Sigmoid colon (tissue), 7 donors: ENCODE measurements at regions of chr4 and their contacts with region 1.

Region 1: DNA sequence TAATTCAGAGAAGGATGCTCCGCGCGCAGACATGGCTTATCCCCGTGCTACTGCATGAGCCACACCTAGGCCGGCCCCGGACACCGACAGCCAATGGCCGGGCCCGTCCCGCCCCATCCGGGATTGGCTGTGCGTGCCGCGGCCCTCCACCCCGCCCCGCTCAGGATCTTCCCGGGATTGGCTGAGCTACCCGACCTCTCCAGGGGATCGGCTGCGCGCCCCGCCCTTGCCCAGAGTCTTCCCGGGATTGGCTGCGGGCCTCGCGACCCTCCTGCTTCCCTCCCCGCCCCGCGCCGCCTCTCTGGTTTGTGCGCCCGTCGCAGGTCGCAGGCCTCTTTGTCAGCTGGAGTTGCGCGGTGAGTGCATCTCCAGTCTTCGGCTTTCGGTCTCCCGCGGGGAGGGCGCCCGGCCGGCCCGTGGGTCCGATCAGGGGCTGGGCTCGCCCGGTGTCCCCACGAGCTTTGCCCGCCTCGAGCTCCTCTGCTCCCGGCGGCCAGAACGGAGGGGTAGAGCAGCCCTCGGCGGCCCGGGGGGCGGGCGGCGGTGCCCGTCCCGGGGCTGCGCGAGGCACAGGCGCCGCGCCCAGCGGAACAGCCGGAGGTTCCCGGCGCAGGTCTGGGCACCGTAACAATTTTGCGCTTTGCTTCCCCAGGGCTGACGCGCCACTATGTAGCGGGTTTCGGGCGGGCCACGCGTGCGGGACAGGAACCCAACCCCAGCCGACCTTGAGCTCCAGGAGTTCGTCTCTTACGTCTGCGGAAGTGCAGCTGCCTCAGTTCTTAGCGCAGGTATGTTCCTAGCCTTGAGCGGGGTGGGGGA is 38.8 kb downstream of the ERVMER34-1 start:
- DNase-seq: peak; percentile 99
- H3K4me3 ChIP-seq: peak overlapping the region; percentile 58 to 94 (median 80)
- H3K27ac ChIP-seq: peak overlapping the region; percentile 88 to 94 (median 92)
- H3K4me1 ChIP-seq: peaks cover 0 to 23% (median 15%) of the 10 kb centered on the region in 4 donors
- H3K27me3 ChIP-seq: no peaks in the 10 kb centered on the region
- CTCF ChIP-seq: no peak
- EP300 ChIP-seq: peak in 1 of 4 donors; percentile 21
- POLR2A ChIP-seq: peak; percentile 76 to 81

Region 2: DNA sequence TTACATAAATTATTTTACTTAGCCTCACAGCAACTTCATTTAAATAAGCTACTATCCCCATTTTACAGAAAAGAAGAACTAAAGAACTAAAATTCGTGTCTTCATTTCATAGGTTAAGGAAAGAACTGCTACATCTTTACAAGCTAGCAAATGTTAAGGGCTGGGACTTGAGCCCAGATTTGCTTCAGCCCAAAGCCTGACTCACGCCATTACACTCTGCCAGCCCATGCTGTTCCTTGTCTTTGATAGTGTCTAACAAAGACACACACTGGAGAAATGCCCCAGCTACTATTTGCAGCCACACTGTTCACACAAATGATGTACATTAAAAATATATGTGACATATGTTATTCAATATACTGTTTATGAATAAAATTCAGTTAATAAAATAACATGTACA is 67.8 kb after region 1 on chr4:
- intact Hi-C with region 1: no loop called
- DNase-seq: no peak
- H3K4me3 ChIP-seq: no peak overlapping the region
- H3K27ac ChIP-seq: peak overlapping the region in 2 of 4 donors; percentile 36 to 41
- H3K4me1 ChIP-seq: peaks cover 0 to 13% (median 3%) of the 10 kb centered on the region in 4 donors
- H3K27me3 ChIP-seq: no peaks in the 10 kb centered on the region
- CTCF ChIP-seq: no peak
- EP300 ChIP-seq: no peak
- POLR2A ChIP-seq: no peak

Region 3: DNA sequence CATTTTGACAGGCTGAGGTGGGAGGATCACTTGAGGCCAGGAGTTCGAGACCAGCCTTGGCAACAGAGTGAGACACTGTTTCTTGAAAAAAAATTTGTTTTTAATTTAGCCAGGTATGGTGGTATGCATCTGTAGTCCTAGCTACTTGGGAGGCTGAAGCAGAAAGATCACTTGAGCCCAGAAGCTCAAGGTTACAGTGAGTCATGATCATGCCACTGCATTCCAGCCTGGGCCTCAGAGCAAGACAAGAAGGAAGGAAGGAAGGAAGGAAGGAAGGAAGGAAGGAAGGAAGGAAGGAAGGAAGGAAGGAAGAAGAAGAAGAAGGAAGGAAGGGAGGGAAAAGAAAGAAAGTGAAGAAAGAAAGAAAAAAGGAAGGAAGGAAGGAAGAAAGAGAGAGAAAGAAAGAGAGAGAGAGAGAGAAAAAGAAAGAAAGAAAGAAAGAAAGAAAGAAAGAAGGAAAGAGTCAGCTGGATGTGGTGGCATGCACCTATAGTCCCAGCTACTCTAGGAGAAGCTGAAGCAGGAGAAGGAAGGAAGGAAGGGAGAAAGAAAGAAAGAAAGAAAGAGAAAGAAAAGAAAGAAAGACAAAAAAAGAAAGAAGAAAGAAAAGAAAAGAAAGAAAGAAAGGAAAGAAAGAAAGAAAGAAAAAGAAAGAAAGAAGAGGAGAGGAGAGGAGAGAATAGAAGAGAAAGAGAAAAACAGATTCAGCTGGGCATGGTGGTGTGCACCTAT is 83.0 kb after region 1 on chr4:
- intact Hi-C with region 1: no loop called
- DNase-seq: no peak
- H3K4me3 ChIP-seq: no peak overlapping the region
- H3K27ac ChIP-seq: no peak overlapping the region
- H3K4me1 ChIP-seq: no peaks in the 10 kb centered on the region
- H3K27me3 ChIP-seq: no peaks in the 10 kb centered on the region
- CTCF ChIP-seq: no peak
- EP300 ChIP-seq: no peak
- POLR2A ChIP-seq: no peak

Region 4: DNA sequence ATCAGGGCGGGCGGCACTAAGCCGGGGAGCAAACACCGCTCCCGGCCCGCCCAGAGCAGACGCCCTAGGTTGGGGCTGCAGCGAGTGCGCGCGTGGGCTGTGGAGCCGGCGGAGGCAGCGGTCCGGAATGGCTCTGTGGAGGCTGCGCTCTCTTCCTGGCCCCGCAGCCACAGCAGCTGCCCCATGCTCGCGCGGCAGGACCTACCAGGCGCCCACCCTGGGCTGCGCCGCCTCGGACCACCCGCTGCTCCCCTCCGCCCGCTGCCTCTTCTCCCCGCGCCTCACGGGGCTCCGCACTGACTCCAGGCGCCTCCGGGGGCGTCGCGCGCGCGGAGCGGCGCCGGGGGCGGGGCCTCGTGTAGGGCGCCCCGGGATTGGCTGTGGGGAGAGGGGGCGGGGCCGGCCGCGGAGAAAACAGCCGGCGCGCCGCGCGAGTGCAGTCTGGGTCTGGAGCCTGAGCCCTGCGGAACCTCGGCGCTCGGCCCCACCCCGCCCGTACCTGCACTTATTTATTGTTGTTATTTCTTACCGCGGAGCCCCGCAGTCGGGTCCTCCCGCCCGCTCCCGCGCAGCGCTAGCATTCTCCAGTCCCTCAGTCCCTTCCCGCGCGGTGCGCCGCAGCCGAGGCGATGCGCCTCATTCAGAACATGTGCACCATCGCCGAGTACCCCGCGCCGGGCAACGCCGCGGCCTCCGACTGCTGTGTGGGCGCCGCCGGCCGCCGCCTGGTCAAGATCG is 149.7 kb after region 1 on chr4 and contains the start of gene RASL11B:
- intact Hi-C with region 1: loop called (anchors 5 kb)
- DNase-seq: peak; percentile 87
- H3K4me3 ChIP-seq: peak within 1 kb of the TSS; percentile 44 to 75 (median 65)
- H3K27ac ChIP-seq: peak within 1 kb of the TSS; percentile 45 to 69 (median 58)
- H3K4me1 ChIP-seq: peaks cover 0 to 27% (median 22%) of the 10 kb centered on the region in 4 donors
- H3K27me3 ChIP-seq: peaks cover 0 to 11% (median 6%) of the 10 kb centered on the region in 3 donors
- CTCF ChIP-seq: peak in 2 of 4 experiments; percentile 20 to 25
- EP300 ChIP-seq: no peak
- POLR2A ChIP-seq: no peak
- total RNA-seq, gene RASL11B: 0.36 to 2.2 (median 0.60) TPM